ENCODE measurements at regions of chr1 and their contacts with region 1.

Region 1: DNA sequence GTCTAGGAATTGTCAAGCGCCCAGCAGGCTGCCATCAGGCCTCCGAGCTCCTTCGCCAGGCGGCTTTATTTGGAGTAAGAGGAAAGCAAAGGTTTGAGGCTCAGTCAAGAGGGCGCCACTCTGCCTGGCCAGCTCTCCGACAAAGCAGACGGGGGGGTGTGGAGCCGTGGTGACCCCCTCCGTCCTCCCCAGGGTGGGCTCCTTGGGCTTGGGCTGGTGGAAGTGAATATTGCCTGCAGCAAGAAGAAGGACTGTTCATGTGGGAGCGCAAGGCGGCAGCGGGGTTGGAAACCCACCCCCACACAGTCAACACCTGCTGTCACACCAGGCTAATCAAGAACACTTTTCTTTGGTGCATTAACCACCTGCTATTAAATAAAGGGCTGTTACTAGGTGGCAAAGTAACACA is 14.6 kb downstream of the EPHX1 start:
- DNase-seq: peak in 2 of 5 donors; percentile 35 to 42
- H3K4me3 ChIP-seq: no peak overlapping the region
- H3K27ac ChIP-seq: peak overlapping the region; percentile 60 to 89
- H3K4me1 ChIP-seq: peaks cover 53% of the 10 kb centered on the region
- H3K27me3 ChIP-seq: no peaks in the 10 kb centered on the region
- CTCF ChIP-seq: no peak
- EP300 ChIP-seq: no peak
- POLR2A ChIP-seq: no peak

Region 2: GRCh38 chr1:226786550-226786949 is 962.0 kb after region 1 on chr1:
- intact Hi-C with region 1: no loop called
- DNase-seq: no peak
- H3K4me3 ChIP-seq: no peak overlapping the region
- H3K27ac ChIP-seq: no peak overlapping the region
- H3K4me1 ChIP-seq: no peaks in the 10 kb centered on the region
- H3K27me3 ChIP-seq: no peaks in the 10 kb centered on the region
- CTCF ChIP-seq: no peak
- EP300 ChIP-seq: no peak
- POLR2A ChIP-seq: no peak

Region 3: GRCh38 chr1:227016990-227017389 is 1192.5 kb after region 1 on chr1:
- intact Hi-C with region 1: loop called in 1 of 4 experiments (anchors 5 kb)
- DNase-seq: no peak
- H3K4me3 ChIP-seq: no peak overlapping the region
- H3K27ac ChIP-seq: no peak overlapping the region
- H3K4me1 ChIP-seq: no peaks in the 10 kb centered on the region
- H3K27me3 ChIP-seq: no peaks in the 10 kb centered on the region
- CTCF ChIP-seq: no peak
- EP300 ChIP-seq: no peak
- POLR2A ChIP-seq: no peak